Mammary epithelial cell (primary cell): ENCODE measurements at regions of chr15 and their contacts with region 1.

Region 1: DNA sequence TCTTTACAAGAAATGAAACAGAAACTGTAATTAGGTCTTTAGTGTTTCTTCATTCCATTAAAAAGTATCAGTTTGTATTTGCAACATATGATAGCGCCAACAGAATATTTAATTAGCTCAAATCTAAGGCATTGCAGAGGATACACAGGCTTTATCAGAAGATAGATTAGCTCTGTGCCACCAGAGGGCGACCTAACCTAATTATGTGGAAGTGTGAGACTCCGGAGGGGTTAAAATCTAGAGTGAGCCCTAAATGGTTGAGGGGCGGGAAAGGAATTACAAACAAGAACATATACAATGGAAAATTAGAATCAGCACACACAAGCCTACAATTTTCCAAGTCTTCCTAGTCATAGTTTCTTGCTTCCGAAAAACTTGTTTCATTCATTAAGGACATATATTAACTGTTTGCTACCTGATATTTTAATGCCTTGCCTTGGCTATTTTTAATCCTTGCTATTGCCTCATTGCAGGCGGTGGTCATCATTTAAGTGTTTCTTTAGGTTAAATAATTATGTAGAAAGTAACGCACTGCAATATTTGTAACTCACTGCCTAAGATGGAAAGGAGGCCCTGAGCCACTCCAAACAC is 18.0 kb upstream of the RYR3 start:
- DNase-seq: peak; percentile 42
- H3K4me3 ChIP-seq: no peak overlapping the region
- H3K27ac ChIP-seq: no peak overlapping the region
- H3K4me1 ChIP-seq: peaks cover 24% of the 10 kb centered on the region
- H3K27me3 ChIP-seq: no peaks in the 10 kb centered on the region
- CTCF ChIP-seq: peak; percentile 74 to 77

Region 2: DNA sequence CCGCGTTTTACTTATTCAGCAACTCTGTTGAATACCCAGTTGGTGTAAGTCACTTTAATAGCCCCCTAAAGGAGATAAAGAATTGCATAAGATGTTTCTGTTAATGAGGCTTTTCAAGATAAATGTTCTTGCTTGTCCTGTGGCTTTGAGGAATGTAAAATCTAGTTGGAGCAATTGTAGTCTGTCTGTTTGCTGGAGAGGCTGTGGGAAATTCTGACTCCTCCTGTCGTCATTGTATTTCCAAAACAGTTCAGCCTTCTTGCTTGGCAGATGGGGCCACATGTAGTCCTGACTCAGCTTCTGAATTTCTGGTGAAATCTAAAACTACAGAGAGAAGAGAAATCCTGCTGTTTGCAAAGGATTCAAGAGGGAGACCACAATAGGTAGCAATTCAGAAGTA is 132.3 kb after region 1 on chr15:
- CTCF ChIA-PET with region 1: no interaction called
- dilution Hi-C with region 1: no loop called
- in situ Hi-C with region 1: no loop called
- intact Hi-C with region 1: loop called (anchors 10 kb)
- DNase-seq: peak; percentile 95
- H3K4me3 ChIP-seq: no peak overlapping the region
- H3K27ac ChIP-seq: peak overlapping the region; percentile 18
- H3K4me1 ChIP-seq: peaks cover 9% of the 10 kb centered on the region
- H3K27me3 ChIP-seq: no peaks in the 10 kb centered on the region
- CTCF ChIP-seq: no peak

Region 3: DNA sequence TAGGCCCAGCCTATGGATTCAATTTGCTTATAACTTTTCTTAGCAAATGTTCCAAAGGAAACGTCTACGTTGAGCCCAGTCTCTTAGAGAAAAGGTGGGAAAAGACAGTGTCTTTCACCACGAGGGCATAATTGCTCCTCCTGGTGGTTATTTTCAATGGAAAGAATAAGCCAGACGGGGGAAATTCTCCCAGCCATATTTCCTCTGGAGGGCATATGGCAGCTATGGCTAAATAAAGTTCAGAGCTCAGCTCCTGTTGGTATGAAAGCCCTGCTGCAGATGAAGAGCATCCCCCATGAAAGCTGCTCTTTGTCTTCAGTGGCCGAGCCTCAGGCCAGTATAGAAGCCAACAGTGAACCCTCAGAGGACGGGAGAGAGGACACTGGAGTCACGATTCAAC is 315.9 kb after region 1 on chr15:
- CTCF ChIA-PET with region 1: no interaction called
- dilution Hi-C with region 1: no loop called
- in situ Hi-C with region 1: no loop called
- intact Hi-C with region 1: loop called (anchors 1 kb)
- DNase-seq: no peak
- H3K4me3 ChIP-seq: no peak overlapping the region
- H3K27ac ChIP-seq: no peak overlapping the region
- H3K4me1 ChIP-seq: no peaks in the 10 kb centered on the region
- H3K27me3 ChIP-seq: no peaks in the 10 kb centered on the region
- CTCF ChIP-seq: peak; percentile 28 to 45

Region 4: GRCh38 chr15:33700695-33701304 is 408.0 kb after region 1 on chr15:
- CTCF ChIA-PET with region 1: interaction called, 4 read pairs
- dilution Hi-C with region 1: no loop called
- in situ Hi-C with region 1: loop called in 1 of 2 experiments (anchors 10 kb)
- intact Hi-C with region 1: loop called (anchors 1 kb)
- DNase-seq: peak; percentile 62
- H3K4me3 ChIP-seq: no peak overlapping the region
- H3K27ac ChIP-seq: no peak overlapping the region
- H3K4me1 ChIP-seq: no peaks in the 10 kb centered on the region
- H3K27me3 ChIP-seq: no peaks in the 10 kb centered on the region
- CTCF ChIP-seq: peak; percentile 95 to 99